ENCODE measurements at regions of chr20 and their contacts with region 1.

Region 1: DNA sequence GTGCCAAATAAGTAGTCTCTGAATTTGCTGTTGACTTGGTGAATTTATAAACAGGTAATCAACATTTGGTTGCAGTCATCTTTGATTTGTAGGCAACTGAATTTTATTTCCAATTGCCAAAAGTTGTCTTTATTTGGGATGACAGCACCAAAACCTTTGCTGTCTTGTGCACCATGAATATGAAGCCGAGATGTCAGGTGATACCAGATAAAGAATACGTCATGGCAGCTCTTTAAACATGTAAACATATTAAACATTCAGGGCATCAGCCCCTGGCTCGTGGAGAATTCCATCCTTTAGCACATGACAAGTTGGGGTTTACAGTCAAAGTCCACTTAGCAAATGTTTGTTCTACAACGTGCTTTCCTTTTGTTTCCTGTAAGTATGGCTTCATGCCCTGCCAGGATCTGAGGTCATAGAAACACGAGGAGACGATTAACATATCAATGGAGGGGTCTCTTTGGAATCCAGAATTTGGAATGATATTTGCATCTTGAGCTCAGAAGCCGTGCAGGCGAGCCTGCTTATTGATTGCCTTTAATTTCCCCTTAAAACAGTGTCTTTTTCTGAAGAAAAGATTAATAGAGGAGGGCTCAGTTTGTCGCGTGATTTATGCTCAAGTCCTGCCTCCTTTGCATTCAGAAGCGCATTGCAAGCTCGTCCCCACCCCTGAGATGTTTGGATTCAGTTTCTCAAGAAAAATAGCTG is 170.2 kb upstream of the ZNF217 start:
- DNase-seq: peak; percentile 46
- H3K4me3 ChIP-seq: no peak overlapping the region
- H3K27ac ChIP-seq: no peak overlapping the region
- H3K4me1 ChIP-seq: no peaks in the 10 kb centered on the region
- H3K27me3 ChIP-seq: no peaks in the 10 kb centered on the region
- CTCF ChIP-seq: no peak
- POLR2A ChIP-seq: no peak

Region 2: GRCh38 chr20:53926428-53927028 is 162.7 kb after region 1 on chr20:
- CTCF ChIA-PET with region 1: no interaction called
- POLR2A ChIA-PET with region 1: no interaction called
- dilution Hi-C with region 1: no loop called
- intact Hi-C with region 1: no loop called
- DNase-seq: peak; percentile 96
- H3K4me3 ChIP-seq: no peak overlapping the region
- H3K27ac ChIP-seq: peak overlapping the region; percentile 77
- H3K4me1 ChIP-seq: peaks cover 13% of the 10 kb centered on the region
- H3K27me3 ChIP-seq: no peaks in the 10 kb centered on the region
- CTCF ChIP-seq: no peak
- POLR2A ChIP-seq: peak; percentile 38

Region 3: DNA sequence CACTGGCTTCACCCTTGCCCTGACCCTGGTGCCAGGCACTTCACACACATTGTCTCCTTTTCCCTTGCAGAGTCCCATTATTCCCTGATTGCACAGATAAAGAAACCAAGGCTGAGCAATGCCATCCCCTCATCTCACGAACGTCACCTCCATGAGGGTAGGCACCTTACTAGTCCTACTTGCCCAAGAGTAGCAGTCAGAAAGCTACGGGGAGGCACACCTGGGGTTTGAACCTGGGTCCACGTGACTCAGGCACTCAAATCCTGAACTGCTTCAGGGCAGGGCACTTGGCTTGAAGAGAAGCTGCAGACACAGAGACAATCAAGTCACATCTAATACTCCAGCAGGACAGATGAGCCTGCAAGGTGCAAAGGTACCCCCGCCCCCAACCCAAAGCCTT is 304.6 kb after region 1 on chr20:
- CTCF ChIA-PET with region 1: no interaction called
- POLR2A ChIA-PET with region 1: interaction called, 10 read pairs
- dilution Hi-C with region 1: no loop called
- intact Hi-C with region 1: no loop called
- DNase-seq: no peak
- H3K4me3 ChIP-seq: no peak overlapping the region
- H3K27ac ChIP-seq: no peak overlapping the region
- H3K4me1 ChIP-seq: no peaks in the 10 kb centered on the region
- H3K27me3 ChIP-seq: no peaks in the 10 kb centered on the region
- CTCF ChIP-seq: no peak
- POLR2A ChIP-seq: no peak